Mammary epithelial cell (primary cell): ENCODE measurements at regions of chr20 and their contacts with region 1.

Region 1: DNA sequence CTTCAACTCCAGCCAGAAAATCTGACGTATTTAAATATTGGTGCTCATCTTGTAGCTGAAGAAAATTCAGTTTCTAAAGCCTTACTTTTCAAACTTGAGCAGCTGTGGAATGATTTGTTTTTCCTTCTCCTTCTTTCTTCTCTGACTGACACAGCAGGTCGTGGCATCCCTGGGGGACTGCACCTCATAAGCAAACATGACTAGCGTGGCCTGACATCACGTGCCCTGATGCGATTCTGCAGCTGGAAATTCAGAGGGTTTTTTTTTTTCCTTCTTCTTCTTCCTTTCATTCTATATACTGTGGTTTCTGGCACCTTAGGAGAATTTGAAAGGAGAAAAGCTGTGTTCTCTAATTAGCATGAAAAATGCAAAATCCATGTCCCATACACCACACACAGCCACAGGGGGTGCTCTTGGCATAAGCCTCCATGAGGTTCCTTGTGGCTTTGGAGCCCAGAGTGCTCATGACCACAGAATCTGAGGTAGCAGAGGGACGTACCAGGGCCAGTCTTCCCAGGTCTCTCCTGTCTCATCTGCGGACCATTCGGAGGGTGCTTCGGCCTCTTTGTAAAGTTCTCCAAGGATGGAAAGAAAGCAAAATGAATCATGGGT is 258.5 kb upstream of the CDH4 start:
- DNase-seq: no peak
- H3K4me3 ChIP-seq: no peak overlapping the region
- H3K27ac ChIP-seq: no peak overlapping the region
- H3K4me1 ChIP-seq: no peaks in the 10 kb centered on the region
- H3K27me3 ChIP-seq: peaks cover 5% of the 10 kb centered on the region
- CTCF ChIP-seq: peak; percentile 36 to 45

Region 2: DNA sequence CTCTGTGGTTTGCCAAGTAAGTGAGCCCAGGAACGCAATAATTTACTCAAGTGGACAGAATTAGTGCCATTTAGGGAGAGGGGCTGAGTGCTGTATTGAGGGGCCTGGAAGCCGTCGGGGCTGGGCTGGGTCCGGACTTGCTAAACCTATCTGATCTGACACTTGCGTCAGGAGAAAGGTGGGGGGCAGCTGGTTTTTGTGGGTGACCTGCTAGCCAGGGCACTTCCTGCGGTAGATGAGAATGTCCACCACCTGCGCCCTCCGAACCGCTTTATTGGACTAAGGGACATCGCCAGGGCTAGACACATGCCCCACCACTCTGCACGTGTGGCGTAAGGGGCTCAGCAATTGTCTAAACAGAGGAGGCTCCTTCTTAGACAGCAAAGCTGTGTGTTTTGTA is 397.6 kb after region 1 on chr20:
- CTCF ChIA-PET with region 1: interaction called, 15 read pairs
- dilution Hi-C with region 1: no loop called
- in situ Hi-C with region 1: no loop called
- intact Hi-C with region 1: no loop called
- DNase-seq: no peak
- H3K4me3 ChIP-seq: no peak overlapping the region
- H3K27ac ChIP-seq: peak overlapping the region; percentile 0
- H3K4me1 ChIP-seq: peaks cover 29% of the 10 kb centered on the region
- H3K27me3 ChIP-seq: no peaks in the 10 kb centered on the region
- CTCF ChIP-seq: no peak